Natural killer cell (primary cell): ENCODE measurements at regions of chr1 and their contacts with region 1.

Region 1: GRCh38 chr1:25543425-25544242 is at the start of gene LDLRAP1:
- DNase-seq: peak; percentile 60 to 79
- ATAC-seq: peak; percentile 89 to 96 (median 94)
- H3K4me3 ChIP-seq: peak within 1 kb of the TSS; percentile 47
- H3K4me3 Mint-ChIP-seq: peak within 1 kb of the TSS; percentile 86
- H3K27ac ChIP-seq: no peak within 1 kb of the TSS
- H3K27ac Mint-ChIP-seq: peak within 1 kb of the TSS in 1 of 2 donors; percentile 57
- H3K4me1 ChIP-seq: peaks cover 40% of the 10 kb centered on the region
- H3K4me1 Mint-ChIP-seq: peaks cover 6 to 24% of the 10 kb centered on the region in 2 donors
- H3K27me3 ChIP-seq: no peaks in the 10 kb centered on the region
- H3K27me3 Mint-ChIP-seq: no peaks in the 10 kb centered on the region
- CTCF ChIP-seq: no peak
- total RNA-seq, gene LDLRAP1: 25.2 to 34.0 (median 27.4) TPM

Region 2: GRCh38 chr1:25771246-25772114 is 227.8 kb after region 1 on chr1:
- intact Hi-C with region 1: loop called (anchors 10 kb)
- DNase-seq: peak in 1 of 2 donors; percentile 65
- ATAC-seq: no peak
- H3K4me3 ChIP-seq: no peak overlapping the region
- H3K4me3 Mint-ChIP-seq: no peak overlapping the region
- H3K27ac ChIP-seq: no peak overlapping the region
- H3K27ac Mint-ChIP-seq: no peak overlapping the region
- H3K4me1 ChIP-seq: peaks cover 34% of the 10 kb centered on the region
- H3K4me1 Mint-ChIP-seq: peaks cover 19 to 30% of the 10 kb centered on the region in 2 donors
- H3K27me3 ChIP-seq: peaks cover 2% of the 10 kb centered on the region
- H3K27me3 Mint-ChIP-seq: peaks cover 9 to 12% of the 10 kb centered on the region in 2 donors
- CTCF ChIP-seq: no peak

Region 3: DNA sequence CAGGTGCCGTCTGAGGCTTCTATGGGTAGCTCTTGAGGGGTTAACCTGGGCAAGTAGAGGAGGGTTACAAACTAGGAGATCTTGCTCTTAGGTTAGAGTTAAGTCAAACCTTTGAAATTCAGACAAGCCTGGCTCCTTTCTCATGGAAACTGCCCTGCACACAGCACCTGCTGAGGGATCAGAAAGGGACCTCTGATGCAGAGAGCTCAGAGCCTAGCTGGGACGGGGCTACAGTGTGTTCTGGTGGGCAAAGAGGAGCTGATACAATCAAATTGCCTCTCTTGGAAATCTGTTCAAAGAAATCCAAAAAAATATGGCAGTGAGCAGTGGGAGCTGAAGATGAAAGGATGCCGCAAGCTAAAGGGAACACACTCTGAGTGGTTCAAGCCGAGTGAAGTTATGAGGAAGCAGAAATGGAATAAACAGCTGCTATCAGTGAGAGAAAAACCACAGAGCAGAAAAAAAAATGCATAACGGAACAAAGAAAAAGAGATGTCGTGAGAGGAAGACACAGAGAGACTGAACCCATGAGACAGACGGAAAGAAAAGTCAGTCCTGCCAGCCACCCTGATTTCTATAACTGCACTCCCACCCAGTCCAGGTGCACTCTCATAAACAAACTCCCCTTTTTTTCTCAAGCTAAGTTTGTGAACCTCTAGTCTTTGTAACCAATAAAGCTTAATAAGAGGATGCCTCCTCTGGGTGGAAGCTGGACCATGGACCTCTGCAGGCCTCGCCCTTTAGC is 427.6 kb after region 1 on chr1:
- intact Hi-C with region 1: no loop called
- DNase-seq: peak in 1 of 2 donors; percentile 61
- ATAC-seq: peak; percentile 10 to 39 (median 20)
- H3K4me3 ChIP-seq: no peak overlapping the region
- H3K4me3 Mint-ChIP-seq: no peak overlapping the region
- H3K27ac ChIP-seq: peak overlapping the region; percentile 24
- H3K27ac Mint-ChIP-seq: peak overlapping the region; percentile 36 to 83
- H3K4me1 ChIP-seq: peaks cover 15% of the 10 kb centered on the region
- H3K4me1 Mint-ChIP-seq: peaks cover 52 to 71% of the 10 kb centered on the region in 2 donors
- H3K27me3 ChIP-seq: no peaks in the 10 kb centered on the region
- H3K27me3 Mint-ChIP-seq: no peaks in the 10 kb centered on the region
- CTCF ChIP-seq: no peak